Activated T-helper 2 cell treated with anti-CD3 and anti-CD28 coated beads, Interferon-gamma antibody, Interleukin-2, Interleukin-4, amounts not matched to agents 10 μg/mL and 5 μg/mL and 100 μg/mL, durations not matched to agents 14 hours and 24 hours and 36 hours (primary cell): ENCODE measurements at regions of chr3 and their contacts with region 1.

Region 1: GRCh38 chr3:28050895-28051294 is 190.5 kb upstream of the CMC1 start:
- DNase-seq: no peak
- H3K4me3 Mint-ChIP-seq: no peak overlapping the region
- H3K27ac Mint-ChIP-seq: peak overlapping the region; percentile 79
- H3K4me1 Mint-ChIP-seq: peaks cover 26% of the 10 kb centered on the region
- H3K27me3 Mint-ChIP-seq: peaks cover 9% of the 10 kb centered on the region

Region 2: DNA sequence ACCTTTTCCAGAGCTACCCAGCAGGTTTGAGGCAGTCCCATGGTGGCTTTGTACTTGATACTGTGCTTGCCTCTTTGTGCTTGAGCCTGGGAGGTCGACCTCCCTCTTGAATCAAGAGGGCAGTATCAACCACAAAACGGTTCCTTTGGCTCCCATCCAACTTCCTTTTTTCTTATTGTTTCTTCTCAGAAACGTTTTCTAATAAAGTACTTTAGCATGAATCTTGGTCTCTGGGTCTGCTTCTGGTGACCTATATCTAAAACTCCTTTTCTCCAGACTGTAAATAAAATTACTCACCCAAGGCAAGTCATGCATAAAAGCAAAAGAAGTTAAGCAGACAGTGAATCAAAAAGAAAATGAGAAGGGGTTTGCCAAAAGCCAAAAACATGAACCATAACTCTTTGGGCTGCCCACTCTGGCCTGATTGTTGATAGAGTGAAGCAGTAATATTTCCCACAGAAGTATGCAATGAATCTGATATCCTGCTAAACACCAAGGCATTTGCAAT is 454.5 kb before region 1 on chr3:
- intact Hi-C with region 1: loop called (anchors 10 kb)
- DNase-seq: no peak
- H3K4me3 Mint-ChIP-seq: no peak overlapping the region
- H3K27ac Mint-ChIP-seq: peak overlapping the region; percentile 33
- H3K4me1 Mint-ChIP-seq: peaks cover 26% of the 10 kb centered on the region
- H3K27me3 Mint-ChIP-seq: no peaks in the 10 kb centered on the region

Region 3: GRCh38 chr3:27712136-27713077 is 338.5 kb before region 1 on chr3:
- intact Hi-C with region 1: loop called (anchors 2 kb)
- DNase-seq: peak; percentile 76
- H3K4me3 Mint-ChIP-seq: peak overlapping the region; percentile 93
- H3K27ac Mint-ChIP-seq: peak overlapping the region; percentile 85
- H3K4me1 Mint-ChIP-seq: peaks cover 38% of the 10 kb centered on the region
- H3K27me3 Mint-ChIP-seq: peaks cover 52% of the 10 kb centered on the region

Region 4: DNA sequence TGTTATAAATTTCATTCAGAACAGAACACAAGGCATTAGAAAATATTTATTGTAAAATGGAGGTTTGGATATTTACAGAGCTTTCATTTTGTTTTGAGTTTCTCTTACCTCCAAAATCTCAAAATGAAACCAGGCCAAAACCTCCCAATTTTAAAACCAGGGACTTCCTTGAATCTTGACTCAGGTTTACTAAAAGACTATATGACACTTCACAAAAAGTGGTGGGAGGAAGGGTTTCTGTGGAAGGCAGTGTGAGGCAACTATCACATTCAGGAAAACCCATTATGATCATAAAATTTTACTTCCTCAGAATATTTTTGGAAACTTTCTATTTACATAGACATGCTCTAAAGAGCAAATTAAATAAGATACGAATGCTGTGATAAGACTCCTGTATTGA is 123.0 kb before region 1 on chr3:
- intact Hi-C with region 1: loop called (anchors 2 kb)
- DNase-seq: no peak
- H3K4me3 Mint-ChIP-seq: no peak overlapping the region
- H3K27ac Mint-ChIP-seq: peak overlapping the region; percentile 62
- H3K4me1 Mint-ChIP-seq: peaks cover 56% of the 10 kb centered on the region
- H3K27me3 Mint-ChIP-seq: no peaks in the 10 kb centered on the region

Region 5: GRCh38 chr3:27960133-27960532 is 90.8 kb before region 1 on chr3:
- intact Hi-C with region 1: loop called (anchors 2 kb)
- DNase-seq: no peak
- H3K4me3 Mint-ChIP-seq: no peak overlapping the region
- H3K27ac Mint-ChIP-seq: no peak overlapping the region
- H3K4me1 Mint-ChIP-seq: peaks cover 41% of the 10 kb centered on the region
- H3K27me3 Mint-ChIP-seq: no peaks in the 10 kb centered on the region

Region 6: GRCh38 chr3:28036599-28037575 is 14.0 kb before region 1 on chr3:
- intact Hi-C with region 1: loop called (anchors 2 kb)
- DNase-seq: no peak
- H3K4me3 Mint-ChIP-seq: no peak overlapping the region
- H3K27ac Mint-ChIP-seq: no peak overlapping the region
- H3K4me1 Mint-ChIP-seq: peaks cover 27% of the 10 kb centered on the region
- H3K27me3 Mint-ChIP-seq: no peaks in the 10 kb centered on the region

Region 7: DNA sequence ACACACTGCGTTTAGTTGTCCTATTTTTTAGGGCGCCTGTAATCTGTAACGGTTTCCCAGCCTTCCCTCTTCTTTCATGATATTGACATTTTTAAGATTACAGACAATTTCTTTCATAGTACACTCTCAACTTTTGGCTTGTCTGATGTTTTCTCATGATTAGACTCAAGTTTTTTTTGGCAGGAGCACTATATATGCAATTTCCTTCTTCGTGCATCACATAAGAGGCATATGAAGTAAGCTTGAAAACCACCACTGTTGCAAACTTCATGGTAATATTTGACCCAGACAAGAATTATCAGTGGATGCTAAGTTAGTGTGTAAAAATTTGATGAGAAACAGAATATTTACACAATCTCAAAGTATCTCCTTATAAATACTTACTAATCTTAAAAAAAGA is 71.3 kb after region 1 on chr3:
- intact Hi-C with region 1: no loop called
- DNase-seq: no peak
- H3K4me3 Mint-ChIP-seq: no peak overlapping the region
- H3K27ac Mint-ChIP-seq: no peak overlapping the region
- H3K4me1 Mint-ChIP-seq: peaks cover 1% of the 10 kb centered on the region
- H3K27me3 Mint-ChIP-seq: peaks cover 7% of the 10 kb centered on the region

Region 8: GRCh38 chr3:28241221-28242160 is 190.6 kb after region 1 on chr3 and contains the start of gene CMC1:
- intact Hi-C with region 1: loop called (anchors 5 kb)
- DNase-seq: peak; percentile 86
- H3K4me3 Mint-ChIP-seq: peak within 1 kb of the TSS; percentile 89
- H3K27ac Mint-ChIP-seq: peak within 1 kb of the TSS; percentile 93
- H3K4me1 Mint-ChIP-seq: peaks cover 38% of the 10 kb centered on the region
- H3K27me3 Mint-ChIP-seq: no peaks in the 10 kb centered on the region
- total RNA-seq, gene CMC1: 20.6 and 23.5 TPM in 2 replicates